ENCODE measurements at regions of chr9 and their contacts with region 1.

Region 1: GRCh38 chr9:81689343-81690190 is at the start of gene TLE1:
- DNase-seq: peak; percentile 98
- ATAC-seq: peak; percentile 76
- H3K4me3 ChIP-seq: peak within 1 kb of the TSS; percentile 87 to 93 (median 92)
- H3K27ac ChIP-seq: peak within 1 kb of the TSS; percentile 91
- H3K4me1 ChIP-seq: peaks cover 36% of the 10 kb centered on the region
- H3K27me3 ChIP-seq: peaks cover 0 to 8% of the 10 kb centered on the region in 2 experiments; a peak in 2 of 5 replicates
- CTCF ChIP-seq: no peak; the same call in 1 of the 2 replicates
- EP300 ChIP-seq: peak in 1 of 2 experiments; percentile 44; a peak in 2 of 4 replicates
- POLR2A ChIP-seq: peak; percentile 42 to 82; a peak in 3 of 4 replicates
- RAD21 ChIP-seq: peak; percentile 59
- total RNA-seq, gene TLE1: 30.7 and 35.9 TPM in 2 replicates

Region 2: DNA sequence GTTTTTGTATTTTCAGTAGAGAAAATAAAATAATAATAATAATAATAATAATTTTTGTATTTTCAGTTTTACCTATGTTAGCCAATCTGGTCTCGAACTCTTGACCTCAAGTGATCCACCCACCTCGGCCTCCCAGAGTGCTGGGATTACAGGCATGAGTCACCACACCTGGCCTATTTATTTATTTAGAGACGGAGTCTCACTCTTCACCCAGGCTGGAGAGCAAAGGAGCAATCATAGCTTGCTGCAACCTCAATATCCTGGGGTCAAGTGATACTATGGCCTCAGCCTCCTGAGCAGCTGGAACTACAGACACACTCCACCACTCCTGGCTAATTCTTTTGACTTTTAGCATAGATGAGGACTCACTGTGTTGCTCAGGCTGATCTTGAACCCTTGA is 167.7 kb before region 1 on chr9:
- CTCF ChIA-PET with region 1: interaction called, 4 read pairs
- POLR2A ChIA-PET with region 1: interaction called, 13 read pairs
- in situ Hi-C with region 1: loop called (anchors 10 kb)
- intact Hi-C with region 1: loop called (anchors 1 kb)
- DNase-seq: peak; percentile 57
- ATAC-seq: peak; percentile 52
- H3K4me3 ChIP-seq: no peak overlapping the region
- H3K27ac ChIP-seq: no peak overlapping the region
- H3K4me1 ChIP-seq: peaks cover 45% of the 10 kb centered on the region
- H3K27me3 ChIP-seq: no peaks in the 10 kb centered on the region
- CTCF ChIP-seq: no peak
- EP300 ChIP-seq: no peak
- POLR2A ChIP-seq: no peak
- RAD21 ChIP-seq: no peak

Region 3: GRCh38 chr9:81535542-81536241 is 153.9 kb before region 1 on chr9:
- CTCF ChIA-PET with region 1: no interaction called
- POLR2A ChIA-PET with region 1: interaction called, 5 read pairs
- in situ Hi-C with region 1: no loop called
- intact Hi-C with region 1: loop called (anchors 1 kb)
- DNase-seq: peak; percentile 99
- ATAC-seq: peak; percentile 98
- H3K4me3 ChIP-seq: no peak overlapping the region
- H3K27ac ChIP-seq: peak overlapping the region; percentile 56
- H3K4me1 ChIP-seq: peaks cover 58% of the 10 kb centered on the region
- H3K27me3 ChIP-seq: no peaks in the 10 kb centered on the region
- CTCF ChIP-seq: no peak
- EP300 ChIP-seq: peak; percentile 90 to 99
- POLR2A ChIP-seq: no peak
- RAD21 ChIP-seq: no peak

Region 4: GRCh38 chr9:81609782-81610739 is 79.5 kb before region 1 on chr9:
- CTCF ChIA-PET with region 1: no interaction called
- POLR2A ChIA-PET with region 1: interaction called, 3 read pairs
- in situ Hi-C with region 1: no loop called
- intact Hi-C with region 1: loop called (anchors 2 kb)
- DNase-seq: peak; percentile 94
- ATAC-seq: peak; percentile 97
- H3K4me3 ChIP-seq: peak overlapping the region in 1 of 3 experiments; percentile 11; a peak in 1 of 6 replicates
- H3K27ac ChIP-seq: peak overlapping the region; percentile 67
- H3K4me1 ChIP-seq: peaks cover 78% of the 10 kb centered on the region
- H3K27me3 ChIP-seq: no peaks in the 10 kb centered on the region
- CTCF ChIP-seq: peak; percentile 11; the same call in 1 of the 2 replicates
- EP300 ChIP-seq: peak in 1 of 2 experiments; percentile 96; a peak in 2 of 4 replicates
- POLR2A ChIP-seq: no peak
- RAD21 ChIP-seq: no peak

Region 5: GRCh38 chr9:81621785-81622259 is 67.7 kb before region 1 on chr9:
- CTCF ChIA-PET with region 1: no interaction called
- POLR2A ChIA-PET with region 1: no interaction called
- in situ Hi-C with region 1: no loop called
- intact Hi-C with region 1: no loop called
- DNase-seq: no peak
- ATAC-seq: no peak
- H3K4me3 ChIP-seq: no peak overlapping the region
- H3K27ac ChIP-seq: no peak overlapping the region
- H3K4me1 ChIP-seq: 0 out of 2 replicates have a peak, but pooled peaks cover 7% of the 10 kb centered on the region
- H3K27me3 ChIP-seq: no peaks in the 10 kb centered on the region
- CTCF ChIP-seq: no peak
- EP300 ChIP-seq: no peak
- POLR2A ChIP-seq: no peak
- RAD21 ChIP-seq: no peak

Region 6: GRCh38 chr9:81656004-81656403 is 33.6 kb before region 1 on chr9:
- CTCF ChIA-PET with region 1: no interaction called
- POLR2A ChIA-PET with region 1: interaction called, 9 read pairs
- in situ Hi-C with region 1: no loop called
- intact Hi-C with region 1: loop called (anchors 1 kb)
- DNase-seq: peak; percentile 21
- ATAC-seq: peak; percentile 72
- H3K4me3 ChIP-seq: no peak overlapping the region; a peak in 1 of 6 replicates
- H3K27ac ChIP-seq: peak overlapping the region; percentile 39
- H3K4me1 ChIP-seq: peaks cover 61% of the 10 kb centered on the region
- H3K27me3 ChIP-seq: no peaks in the 10 kb centered on the region
- CTCF ChIP-seq: no peak
- EP300 ChIP-seq: no peak
- POLR2A ChIP-seq: no peak
- RAD21 ChIP-seq: no peak

Region 7: DNA sequence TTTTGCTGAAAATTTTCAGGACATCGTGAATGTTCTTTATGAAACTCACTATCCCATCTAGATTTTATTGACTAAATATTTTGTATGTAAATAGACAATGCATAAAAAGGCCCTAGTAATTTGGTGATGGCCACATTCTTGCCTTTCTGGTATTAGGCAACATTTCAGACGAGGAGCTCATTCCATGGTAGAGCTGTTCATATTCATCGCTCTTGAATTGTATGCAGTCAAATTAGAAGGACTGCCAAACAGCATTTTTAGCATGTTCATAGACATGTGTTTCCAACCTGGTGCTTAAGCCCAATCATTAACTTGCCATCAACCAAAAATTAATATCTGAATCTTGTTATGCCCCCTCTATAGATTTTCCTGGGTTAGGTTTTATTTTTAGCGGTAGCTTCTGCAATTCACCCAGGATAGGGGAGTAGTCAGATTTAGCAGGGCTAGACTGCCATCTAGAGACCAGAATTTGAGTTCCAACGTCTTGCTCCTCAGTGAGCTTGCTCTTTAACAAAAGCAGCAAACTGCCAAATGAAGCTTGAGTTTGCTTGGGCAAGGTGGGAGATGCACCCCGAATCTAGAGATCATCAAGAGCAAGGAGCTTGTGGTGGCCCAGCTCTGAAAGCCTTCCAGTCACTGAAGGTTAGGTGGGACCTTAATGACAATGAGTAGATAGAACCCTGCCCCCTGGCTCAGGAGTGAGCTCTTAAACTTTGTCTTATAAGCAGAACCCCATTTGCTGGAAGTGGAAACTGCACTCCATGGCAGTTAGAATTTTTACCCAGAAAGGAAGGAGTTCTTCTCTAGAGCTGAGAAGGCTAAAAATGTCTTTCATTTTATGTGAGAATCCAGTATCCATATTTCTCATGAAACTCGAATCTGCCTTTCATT is 917.2 kb after region 1 on chr9:
- CTCF ChIA-PET with region 1: no interaction called
- POLR2A ChIA-PET with region 1: interaction called, 3 read pairs
- in situ Hi-C with region 1: no loop called
- intact Hi-C with region 1: loop called (anchors 2 kb)
- DNase-seq: peak; percentile 69
- ATAC-seq: peak; percentile 91
- H3K4me3 ChIP-seq: no peak overlapping the region; a peak in 1 of 6 replicates
- H3K27ac ChIP-seq: peak overlapping the region; percentile 24
- H3K4me1 ChIP-seq: peaks cover 55% of the 10 kb centered on the region
- H3K27me3 ChIP-seq: no peaks in the 10 kb centered on the region
- CTCF ChIP-seq: peak; percentile 84
- EP300 ChIP-seq: no peak
- POLR2A ChIP-seq: no peak
- RAD21 ChIP-seq: peak; percentile 76